Caco-2 (cell line): ENCODE measurements at regions of chr7 and their contacts with region 1.

Region 1: DNA sequence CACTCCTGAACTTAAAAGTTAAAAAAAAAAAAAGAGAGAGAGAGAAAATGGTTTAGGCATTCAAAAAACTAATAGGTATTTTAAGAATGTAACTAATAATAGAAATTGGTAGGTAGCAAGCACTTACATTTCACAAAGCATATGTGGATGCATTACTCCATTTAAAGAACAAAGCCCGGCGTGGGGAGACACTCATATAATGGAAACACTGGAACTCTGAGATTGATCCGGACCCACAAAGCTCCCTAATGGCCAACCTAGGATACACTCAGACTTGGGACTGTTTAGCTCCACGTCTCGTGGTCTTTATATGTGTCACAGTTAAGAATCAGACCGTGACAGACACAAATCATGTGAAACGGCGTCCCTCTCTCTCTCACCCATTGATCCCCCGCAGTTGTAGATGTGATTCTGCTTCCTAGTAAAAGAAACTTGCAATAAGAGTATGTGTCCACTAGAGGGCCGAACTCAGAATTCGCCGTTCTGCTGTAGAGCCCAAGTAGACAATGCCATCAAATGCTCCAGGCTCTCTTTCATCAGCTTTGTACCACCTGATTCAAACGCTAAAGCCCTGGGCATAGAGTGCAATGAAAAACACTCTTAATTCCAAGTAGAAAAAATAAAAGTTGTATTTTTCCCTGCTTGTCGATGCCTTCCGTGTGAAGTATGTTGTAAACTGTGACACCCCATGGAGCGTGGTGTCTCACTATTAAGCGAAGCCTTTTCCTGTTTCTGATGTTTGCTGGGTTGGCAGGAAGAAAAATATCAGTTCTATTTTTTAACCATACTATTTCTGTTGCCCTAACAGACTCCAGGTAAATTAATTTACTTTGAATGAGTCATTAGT is 429.0 kb upstream of the MTPN start:
- DNase-seq: peak; percentile 36 to 59
- H3K4me3 ChIP-seq: no peak overlapping the region
- H3K4me3 Mint-ChIP-seq: peak overlapping the region; percentile 65
- H3K27ac Mint-ChIP-seq: no peak overlapping the region
- H3K4me1 ChIP-seq: no peaks in the 10 kb centered on the region
- H3K4me1 Mint-ChIP-seq: no peaks in the 10 kb centered on the region
- H3K27me3 ChIP-seq: no peaks in the 10 kb centered on the region
- H3K27me3 Mint-ChIP-seq: peaks cover under 1% of the 10 kb centered on the region
- CTCF ChIP-seq: peak; percentile 72 to 81

Region 2: GRCh38 chr7:136687693-136688322 is 281.7 kb after region 1 on chr7:
- CTCF ChIA-PET with region 1: no interaction called
- POLR2A ChIA-PET with region 1: no interaction called
- intact Hi-C with region 1: loop called (anchors 2 kb)
- DNase-seq: peak in 1 of 2 experiments; percentile 37
- H3K4me3 ChIP-seq: no peak overlapping the region
- H3K4me3 Mint-ChIP-seq: no peak overlapping the region
- H3K27ac Mint-ChIP-seq: no peak overlapping the region
- H3K4me1 ChIP-seq: no peaks in the 10 kb centered on the region
- H3K4me1 Mint-ChIP-seq: no peaks in the 10 kb centered on the region
- H3K27me3 ChIP-seq: no peaks in the 10 kb centered on the region
- H3K27me3 Mint-ChIP-seq: peaks cover 3% of the 10 kb centered on the region
- CTCF ChIP-seq: peak; percentile 42 to 50

Region 3: GRCh38 chr7:137091396-137091795 is 685.2 kb after region 1 on chr7:
- CTCF ChIA-PET with region 1: no interaction called
- POLR2A ChIA-PET with region 1: no interaction called
- intact Hi-C with region 1: loop called (anchors 5 kb)
- DNase-seq: peak in 1 of 2 experiments; percentile 21
- H3K4me3 ChIP-seq: no peak overlapping the region
- H3K4me3 Mint-ChIP-seq: no peak overlapping the region
- H3K27ac Mint-ChIP-seq: no peak overlapping the region
- H3K4me1 ChIP-seq: no peaks in the 10 kb centered on the region
- H3K4me1 Mint-ChIP-seq: no peaks in the 10 kb centered on the region
- H3K27me3 ChIP-seq: no peaks in the 10 kb centered on the region
- H3K27me3 Mint-ChIP-seq: peaks cover 6% of the 10 kb centered on the region
- CTCF ChIP-seq: peak in 1 of 2 experiments; percentile 35